H1 (cell line): ENCODE measurements at regions of chr17 and their contacts with region 1.

Region 1: DNA sequence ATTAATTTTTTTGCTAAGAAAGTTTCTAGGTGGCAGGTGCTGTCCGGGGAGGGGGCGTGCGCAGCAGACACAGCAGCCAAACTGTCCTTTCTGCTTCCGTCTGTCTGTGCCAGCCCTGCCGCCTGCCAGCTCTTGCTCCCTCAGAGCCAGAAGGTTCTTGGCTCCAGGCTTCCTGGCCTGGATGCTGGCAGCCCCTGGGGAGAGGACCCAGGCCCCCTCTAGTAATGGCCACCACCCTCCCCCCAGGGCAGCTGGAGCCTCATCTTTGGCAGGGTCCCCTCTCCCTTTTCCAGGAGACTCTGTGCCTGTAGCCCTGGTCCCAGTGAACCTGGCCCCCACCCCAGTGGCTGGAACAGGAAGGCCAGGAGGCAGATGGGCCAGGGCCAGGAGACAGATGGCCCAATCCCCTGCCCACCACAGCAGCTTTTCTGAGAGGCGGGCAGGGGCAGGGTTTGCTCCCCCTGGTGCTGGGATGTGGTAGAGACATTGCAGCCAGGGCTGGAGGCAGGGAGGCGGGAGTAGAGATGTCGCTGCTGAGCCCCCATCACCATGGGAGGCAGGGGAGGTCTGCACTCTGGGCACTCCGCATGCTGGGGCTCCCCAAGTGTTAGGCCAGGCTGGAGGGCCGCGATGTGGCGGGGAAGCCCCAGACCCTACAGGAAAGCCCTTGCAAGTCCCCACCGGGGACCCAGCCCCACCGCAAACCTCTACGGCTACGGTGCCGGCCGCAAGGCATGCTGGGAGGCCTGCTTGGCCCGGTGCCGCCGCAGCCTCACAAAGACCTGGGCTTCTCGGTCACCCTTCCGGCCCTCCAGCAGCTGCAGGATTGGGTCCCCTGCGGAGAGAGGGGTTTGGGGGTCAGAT is 16.7 kb downstream of the UNC13D start:
- DNase-seq: peak; percentile 44 to 96
- H3K4me3 ChIP-seq: peak overlapping the region in 3 of 4 experiments; percentile 27 to 53 (median 45); a peak in 6 of 8 replicates
- H3K27ac ChIP-seq: peak overlapping the region; percentile 43; the same call in 1 of the 2 replicates
- H3K4me1 ChIP-seq: peaks cover 0 to 28% (median 23%) of the 10 kb centered on the region in 4 experiments; a peak in 6 of 7 replicates
- H3K27me3 ChIP-seq: no peaks in the 10 kb centered on the region
- CTCF ChIP-seq: peak; percentile 92 to 97 (median 95)
- EP300 ChIP-seq: 0 out of 3 replicates have a peak, but pooled peaks of 1 of the 2 experiments have one; percentile 13
- POLR2A ChIP-seq: peak in 1 of 2 experiments; percentile 60; a peak in 2 of 3 replicates
- RAD21 ChIP-seq: peak; percentile 27 to 52; a peak in 3 of 4 replicates

Region 2: DNA sequence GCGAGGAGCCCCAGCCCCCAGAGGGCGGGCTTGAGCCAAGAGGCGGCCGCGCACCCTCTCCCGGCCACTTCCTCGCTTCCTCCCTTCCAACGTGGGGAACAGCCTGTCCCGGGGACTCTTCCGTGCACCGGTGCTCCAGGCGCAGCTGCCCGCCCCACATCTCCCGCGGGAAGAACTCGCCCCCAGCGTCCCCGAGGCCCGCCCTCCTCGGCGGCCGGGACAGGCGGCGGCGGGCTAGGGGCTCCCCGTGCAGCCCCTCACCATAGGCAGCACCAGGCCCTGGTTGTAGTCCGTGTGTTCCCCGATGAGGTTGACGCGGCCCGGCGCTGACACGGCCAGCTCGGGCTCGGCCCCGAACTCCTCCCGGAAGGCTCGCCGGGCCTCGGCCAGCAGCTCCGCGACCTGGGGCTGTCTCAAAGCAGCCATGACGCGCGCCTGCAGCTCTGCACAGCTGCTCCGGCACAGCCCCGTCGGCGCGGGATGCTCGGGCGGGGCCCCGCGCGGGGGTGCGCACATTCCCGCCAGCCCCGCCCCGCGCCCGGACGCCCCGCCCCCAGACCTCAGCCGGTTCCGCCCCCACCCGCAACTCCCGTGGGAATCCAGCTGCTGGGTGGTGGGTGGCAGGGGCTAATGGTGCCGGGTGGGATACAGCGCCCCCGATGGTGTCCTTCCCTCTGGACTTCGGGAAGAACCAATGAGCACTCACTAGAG is 62.6 kb before region 1 on chr17 and contains the start of gene GALK1:
- CTCF ChIA-PET with region 1: interaction called, 23 read pairs
- POLR2A ChIA-PET with region 1: interaction called, 5 read pairs
- DNase-seq: peak in 1 of 2 experiments; percentile 82
- H3K4me3 ChIP-seq: peak within 1 kb of the TSS; percentile 50 to 88 (median 62)
- H3K27ac ChIP-seq: no peak within 1 kb of the TSS
- H3K4me1 ChIP-seq: peaks cover 0 to 8% (median 6%) of the 10 kb centered on the region in 4 experiments; a peak in 5 of 7 replicates
- H3K27me3 ChIP-seq: peaks cover 0 to 2% (median 0%) of the 10 kb centered on the region in 4 experiments; a peak in 1 of 7 replicates
- CTCF ChIP-seq: peak; percentile 67 to 74 (median 67)
- EP300 ChIP-seq: no peak
- POLR2A ChIP-seq: no peak
- RAD21 ChIP-seq: peak; percentile 31 to 45
- total RNA-seq, gene GALK1: 31.0 and 34.1 TPM in 2 replicates

Region 3: GRCh38 chr17:75793460-75793859 is 34.0 kb before region 1 on chr17:
- CTCF ChIA-PET with region 1: interaction called, 18 read pairs
- POLR2A ChIA-PET with region 1: interaction called, 64 read pairs
- DNase-seq: no peak
- H3K4me3 ChIP-seq: no peak overlapping the region
- H3K27ac ChIP-seq: no peak overlapping the region
- H3K4me1 ChIP-seq: no peaks in the 10 kb centered on the region
- H3K27me3 ChIP-seq: no peaks in the 10 kb centered on the region
- CTCF ChIP-seq: no peak
- EP300 ChIP-seq: no peak
- POLR2A ChIP-seq: no peak
- RAD21 ChIP-seq: no peak

Region 4: GRCh38 chr17:75808905-75809715 is 18.4 kb before region 1 on chr17:
- CTCF ChIA-PET with region 1: interaction called, 104 read pairs
- POLR2A ChIA-PET with region 1: interaction called, 6 read pairs
- DNase-seq: no peak
- H3K4me3 ChIP-seq: no peak overlapping the region
- H3K27ac ChIP-seq: no peak overlapping the region
- H3K4me1 ChIP-seq: no peaks in the 10 kb centered on the region
- H3K27me3 ChIP-seq: no peaks in the 10 kb centered on the region
- CTCF ChIP-seq: no peak
- EP300 ChIP-seq: no peak
- POLR2A ChIP-seq: no peak
- RAD21 ChIP-seq: no peak

Region 5: GRCh38 chr17:75845049-75845860 is 17.8 kb after region 1 on chr17:
- CTCF ChIA-PET with region 1: interaction called, 563 read pairs
- POLR2A ChIA-PET with region 1: interaction called, 36 read pairs
- DNase-seq: peak; percentile 57 to 87
- H3K4me3 ChIP-seq: no peak overlapping the region
- H3K27ac ChIP-seq: no peak overlapping the region
- H3K4me1 ChIP-seq: peaks cover 0 to 8% (median 6%) of the 10 kb centered on the region in 4 experiments; a peak in 4 of 7 replicates
- H3K27me3 ChIP-seq: no peaks in the 10 kb centered on the region
- CTCF ChIP-seq: peak; percentile 63 to 93 (median 82)
- EP300 ChIP-seq: no peak
- POLR2A ChIP-seq: no peak
- RAD21 ChIP-seq: peak in 1 of 2 experiments; percentile 49; a peak in 2 of 4 replicates

Region 6: GRCh38 chr17:75896415-75897159 is 69.1 kb after region 1 on chr17 and contains the start of gene TRIM65:
- CTCF ChIA-PET with region 1: interaction called, 10 read pairs
- POLR2A ChIA-PET with region 1: interaction called, 8 read pairs
- DNase-seq: peak in 1 of 2 experiments; percentile 92
- H3K4me3 ChIP-seq: peak within 1 kb of the TSS; percentile 58 to 96 (median 80)
- H3K27ac ChIP-seq: peak within 1 kb of the TSS; percentile 59; the same call in 1 of the 2 replicates
- H3K4me1 ChIP-seq: peaks cover 4 to 25% (median 13%) of the 10 kb centered on the region in 4 experiments
- H3K27me3 ChIP-seq: no peaks in the 10 kb centered on the region
- CTCF ChIP-seq: no peak
- EP300 ChIP-seq: no peak
- POLR2A ChIP-seq: peak; percentile 88 to 94
- RAD21 ChIP-seq: no peak
- total RNA-seq, gene TRIM65: 47.7 and 48.6 TPM in 2 replicates

Region 7: DNA sequence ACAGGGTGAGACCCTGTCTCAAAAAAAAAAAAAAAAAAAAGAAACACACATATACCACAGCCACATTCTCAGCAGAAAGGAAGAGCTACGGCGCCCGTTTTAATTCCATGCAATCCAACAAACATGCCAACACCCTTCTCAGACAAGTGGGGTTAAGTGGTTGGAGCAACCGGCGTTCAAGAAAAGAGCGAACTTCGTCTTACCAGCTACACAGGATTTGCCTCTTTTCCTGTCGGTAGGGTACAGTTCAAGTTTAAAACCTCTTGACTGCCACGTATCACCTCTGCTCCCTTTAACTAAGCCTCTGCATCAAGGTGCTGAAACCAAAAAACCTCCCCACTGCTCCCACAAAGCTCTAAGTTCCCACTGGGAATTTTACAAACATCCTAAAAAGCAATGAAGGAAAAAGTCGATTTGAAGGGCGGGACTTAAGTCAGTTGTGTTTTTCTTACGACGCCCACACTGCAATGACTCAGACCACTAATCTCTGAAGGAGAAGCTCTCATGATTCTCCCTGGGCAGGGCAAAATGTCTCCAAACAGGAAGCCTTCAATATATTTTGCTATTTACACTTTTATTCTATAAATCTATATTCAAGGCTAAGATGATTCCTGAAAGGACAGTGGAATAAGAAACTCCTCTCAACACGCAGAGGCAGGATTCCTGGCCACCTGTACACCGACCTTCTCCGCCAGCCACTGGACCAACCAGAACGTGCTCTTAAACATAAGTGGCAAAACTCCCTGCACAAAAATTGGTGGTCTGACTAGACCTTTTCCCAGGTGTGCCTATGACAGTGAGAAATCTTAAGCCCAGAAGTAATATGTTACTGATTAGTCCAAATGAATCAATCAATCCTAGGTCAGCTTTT is 226.0 kb after region 1 on chr17:
- CTCF ChIA-PET with region 1: no interaction called
- POLR2A ChIA-PET with region 1: no interaction called
- DNase-seq: no peak
- H3K4me3 ChIP-seq: no peak overlapping the region
- H3K27ac ChIP-seq: peak overlapping the region; percentile 19; the same call in 1 of the 2 replicates
- H3K4me1 ChIP-seq: peaks cover 0 to 2% (median 0%) of the 10 kb centered on the region in 4 experiments; a peak in 1 of 7 replicates
- H3K27me3 ChIP-seq: no peaks in the 10 kb centered on the region
- CTCF ChIP-seq: no peak
- EP300 ChIP-seq: no peak
- POLR2A ChIP-seq: no peak
- RAD21 ChIP-seq: no peak